GM13976 (cell line): ENCODE measurements at regions of chrX and their contacts with region 1.

Region 1: DNA sequence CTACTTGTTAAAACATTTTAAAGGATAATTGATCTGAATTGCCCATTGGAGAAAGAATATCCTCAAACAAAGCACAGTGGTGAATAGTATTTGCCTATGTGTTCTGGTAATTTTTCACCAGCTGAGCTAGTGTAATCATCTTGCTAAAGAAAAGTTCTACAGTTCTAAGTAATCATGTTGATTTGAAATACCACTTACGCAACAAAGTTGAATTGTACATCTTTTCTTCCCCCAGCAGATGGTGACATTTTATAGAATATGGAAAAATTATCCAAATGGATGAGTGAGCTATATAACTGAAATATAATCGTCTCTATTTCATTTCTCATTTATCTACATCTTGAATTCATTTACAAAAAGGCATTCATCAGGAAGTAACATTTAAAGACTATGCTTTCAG is 9.7 kb upstream of the ZNF674 start:
- DNase-seq: no peak
- CTCF ChIP-seq: no peak

Region 2: DNA sequence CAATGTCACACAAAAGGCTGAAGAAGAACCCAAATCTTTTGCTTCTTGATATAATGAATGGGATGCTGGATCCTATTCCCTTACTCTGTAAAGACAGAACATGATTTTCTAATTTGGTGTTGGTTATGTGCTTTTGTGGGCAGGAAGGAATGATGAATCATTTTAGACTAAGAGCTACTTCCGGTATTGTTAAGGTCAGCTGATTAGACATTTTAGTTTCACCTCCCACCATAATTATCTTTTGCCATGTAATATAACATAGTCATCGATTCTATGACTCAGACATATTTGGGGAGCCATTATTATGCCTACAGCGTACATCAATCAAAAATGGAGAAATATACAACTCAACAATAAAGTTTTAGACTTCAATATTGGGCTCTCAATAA is 275.0 kb before region 1 on chrX:
- in situ Hi-C with region 1: no loop called
- DNase-seq: no peak
- CTCF ChIP-seq: no peak

Region 3: GRCh38 chrX:46340696-46341095 is 214.2 kb before region 1 on chrX:
- in situ Hi-C with region 1: no loop called
- DNase-seq: no peak
- CTCF ChIP-seq: no peak

Region 4: DNA sequence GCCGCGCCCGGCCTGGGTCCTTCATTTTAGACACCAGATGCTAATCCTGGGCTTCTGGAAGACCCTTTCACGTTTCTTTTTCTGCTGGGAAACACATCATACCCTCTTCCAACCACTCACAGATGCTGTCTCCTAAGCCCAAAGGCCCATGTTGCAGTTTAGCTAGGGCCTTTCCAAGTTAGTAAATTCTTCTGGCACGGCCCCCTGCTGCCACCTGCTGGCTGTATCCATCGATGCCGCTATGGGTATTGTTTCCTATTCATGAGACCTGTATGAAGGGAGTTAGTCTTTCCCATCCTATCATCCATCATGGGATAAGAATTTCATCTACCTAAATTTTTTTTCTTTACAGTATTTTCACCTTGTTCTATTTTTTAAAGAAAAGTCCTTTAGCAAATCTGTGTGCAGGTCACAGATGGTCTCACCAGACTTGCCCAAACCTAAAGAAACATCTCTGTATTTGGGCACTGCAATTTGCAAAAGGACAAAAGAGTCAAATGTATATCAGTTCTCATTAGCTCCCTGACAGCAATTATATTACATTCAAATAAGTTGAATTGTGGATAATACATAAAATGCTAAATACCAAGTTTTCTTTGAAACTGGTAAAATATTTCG is 241.7 kb after region 1 on chrX:
- in situ Hi-C with region 1: loop called (anchors 10 kb)
- DNase-seq: peak; percentile 65
- CTCF ChIP-seq: peak; percentile 82